ENCODE measurements at regions of chr6 and their contacts with region 1.

Region 1: GRCh38 chr6:42572523-42572922 is 8.7 kb downstream of the UBR2 start:
- DNase-seq: no peak
- H3K4me3 ChIP-seq: no peak overlapping the region
- CTCF ChIP-seq: no peak
- POLR2A ChIP-seq: no peak

Region 2: GRCh38 chr6:41527721-41528590 is 1044.6 kb before region 1 on chr6:
- intact Hi-C with region 1: no loop called
- DNase-seq: no peak
- H3K4me3 ChIP-seq: no peak overlapping the region
- CTCF ChIP-seq: no peak
- POLR2A ChIP-seq: no peak

Region 3: GRCh38 chr6:41836022-41836659 is 736.4 kb before region 1 on chr6:
- intact Hi-C with region 1: no loop called
- DNase-seq: no peak
- H3K4me3 ChIP-seq: no peak overlapping the region
- CTCF ChIP-seq: no peak
- POLR2A ChIP-seq: no peak

Region 4: DNA sequence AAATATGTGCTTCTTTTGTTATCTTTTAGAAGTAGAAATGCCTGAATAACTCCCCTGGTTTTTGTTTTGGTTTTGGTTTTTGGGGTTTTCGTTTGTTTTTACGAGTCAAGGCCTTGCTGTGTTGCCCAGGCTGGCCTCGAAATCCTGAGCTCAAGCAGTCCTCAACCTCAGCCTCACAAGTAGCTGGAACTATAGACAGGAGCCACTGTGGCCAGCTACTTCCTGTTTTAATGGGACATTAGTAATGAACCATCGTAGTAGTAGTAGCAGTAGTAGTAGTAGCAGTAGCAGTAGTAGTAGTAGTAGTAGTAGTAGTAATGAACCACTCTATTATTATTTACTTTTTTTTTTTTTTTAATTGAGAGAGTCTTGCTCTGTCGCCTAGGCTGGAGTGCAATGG is 57.3 kb after region 1 on chr6:
- intact Hi-C with region 1: loop called (anchors 10 kb)
- DNase-seq: no peak
- H3K4me3 ChIP-seq: no peak overlapping the region
- CTCF ChIP-seq: no peak
- POLR2A ChIP-seq: no peak

Measured in lower leg skin (tissue), 4 donors.